ENCODE measurements at regions of chr4 and their contacts with region 1.

Region 1: GRCh38 chr4:180734753-180735432 is 1508.3 kb upstream of the TENM3 start:
- DNase-seq: peak; percentile 84
- H3K4me3 ChIP-seq: peak overlapping the region; percentile 38
- H3K27ac ChIP-seq: peak overlapping the region; percentile 98
- H3K4me1 ChIP-seq: peaks cover 46% of the 10 kb centered on the region
- CTCF ChIP-seq: no peak

Region 2: DNA sequence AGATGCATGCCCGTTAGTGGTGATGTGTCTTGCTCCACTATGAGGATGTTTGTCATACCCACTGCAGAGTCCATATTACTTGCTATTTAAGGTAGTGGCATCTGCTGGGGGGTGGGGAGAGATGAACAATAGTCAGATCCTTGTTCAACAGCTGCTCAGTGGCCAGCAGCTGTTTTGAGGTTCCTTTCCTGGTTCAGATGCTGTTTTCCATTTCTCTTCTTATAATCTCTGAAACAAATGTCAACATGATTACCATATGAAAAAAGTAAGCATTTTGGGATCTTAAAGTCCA is 59.6 kb before region 1 on chr4:
- CTCF ChIA-PET with region 1: interaction called, 4 read pairs
- POLR2A ChIA-PET with region 1: interaction called, 23 read pairs
- intact Hi-C with region 1: loop called (anchors 1 kb)
- DNase-seq: peak; percentile 92
- H3K4me3 ChIP-seq: peak overlapping the region; percentile 44
- H3K27ac ChIP-seq: peak overlapping the region; percentile 99
- H3K4me1 ChIP-seq: peaks cover 52% of the 10 kb centered on the region
- CTCF ChIP-seq: no peak

Region 3: GRCh38 chr4:180828440-180829018 is 93.6 kb after region 1 on chr4:
- CTCF ChIA-PET with region 1: no interaction called
- POLR2A ChIA-PET with region 1: interaction called, 3 read pairs
- intact Hi-C with region 1: loop called (anchors 10 kb)
- DNase-seq: peak; percentile 68
- H3K4me3 ChIP-seq: no peak overlapping the region
- H3K27ac ChIP-seq: no peak overlapping the region
- H3K4me1 ChIP-seq: peaks cover 21% of the 10 kb centered on the region
- CTCF ChIP-seq: peak; percentile 95

Region 4: GRCh38 chr4:181176306-181176705 is 441.4 kb after region 1 on chr4:
- CTCF ChIA-PET with region 1: no interaction called
- POLR2A ChIA-PET with region 1: no interaction called
- intact Hi-C with region 1: no loop called
- DNase-seq: no peak
- H3K4me3 ChIP-seq: no peak overlapping the region
- H3K27ac ChIP-seq: no peak overlapping the region
- H3K4me1 ChIP-seq: no peaks in the 10 kb centered on the region
- CTCF ChIP-seq: no peak

Measured in OCI-LY7 (cell line).